Activated naive CD4-positive, alpha-beta T cell treated with anti-CD3 and anti-CD28 coated beads for 36 hours (primary cell): ENCODE measurements at regions of chr10 and their contacts with region 1.

Region 1: GRCh38 chr10:91298224-91298871 is 77.9 kb downstream of the PCGF5 start:
- DNase-seq: peak; percentile 90
- H3K4me3 Mint-ChIP-seq: peak overlapping the region; percentile 71
- H3K27ac Mint-ChIP-seq: no peak overlapping the region
- H3K4me1 Mint-ChIP-seq: peaks cover 8% of the 10 kb centered on the region
- H3K27me3 Mint-ChIP-seq: peaks cover 2% of the 10 kb centered on the region

Region 2: GRCh38 chr10:90912174-90912573 is 386.2 kb before region 1 on chr10:
- CTCF ChIA-PET with region 1: interaction called, 5 read pairs
- intact Hi-C with region 1: loop called (anchors 1 kb)
- DNase-seq: no peak
- H3K4me3 Mint-ChIP-seq: no peak overlapping the region
- H3K27ac Mint-ChIP-seq: no peak overlapping the region
- H3K4me1 Mint-ChIP-seq: peaks cover 2% of the 10 kb centered on the region
- H3K27me3 Mint-ChIP-seq: no peaks in the 10 kb centered on the region

Region 3: DNA sequence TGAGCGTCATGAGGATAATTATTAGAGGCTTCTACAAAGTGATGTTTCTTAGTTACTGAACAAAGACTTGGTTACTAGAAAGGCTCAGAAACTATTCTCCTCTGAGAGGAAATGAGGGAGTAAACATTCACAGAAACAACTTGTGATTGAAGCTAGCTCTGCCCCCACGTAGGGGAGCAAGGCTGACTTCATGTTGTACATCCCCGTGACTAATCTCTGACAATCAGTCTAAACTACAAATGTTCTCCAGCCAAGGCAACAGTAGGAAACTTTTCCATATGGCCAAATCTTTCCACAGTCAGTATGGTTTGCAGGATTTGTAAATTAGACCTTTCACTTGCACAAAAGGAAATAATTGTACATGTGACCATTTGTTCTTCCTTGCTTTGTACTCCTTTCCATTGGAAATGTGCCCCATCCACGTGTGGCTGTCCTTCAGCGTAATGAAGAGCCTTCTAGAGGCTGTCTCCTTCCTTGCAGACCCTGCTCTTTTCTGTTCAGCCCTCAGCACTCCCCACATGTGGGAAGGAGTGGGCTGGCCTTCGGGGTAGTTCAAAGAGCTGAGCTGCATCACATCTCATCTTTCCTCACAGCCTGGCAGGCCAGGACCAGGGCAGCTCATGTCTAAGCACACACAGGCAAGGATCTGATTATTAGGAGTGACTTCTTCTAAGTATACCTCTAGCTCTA is 15.6 kb after region 1 on chr10:
- CTCF ChIA-PET with region 1: interaction called, 17 read pairs
- intact Hi-C with region 1: no loop called
- DNase-seq: peak; percentile 50
- H3K4me3 Mint-ChIP-seq: no peak overlapping the region
- H3K27ac Mint-ChIP-seq: peak overlapping the region; percentile 82
- H3K4me1 Mint-ChIP-seq: peaks cover 11% of the 10 kb centered on the region
- H3K27me3 Mint-ChIP-seq: peaks cover 4% of the 10 kb centered on the region

Region 4: DNA sequence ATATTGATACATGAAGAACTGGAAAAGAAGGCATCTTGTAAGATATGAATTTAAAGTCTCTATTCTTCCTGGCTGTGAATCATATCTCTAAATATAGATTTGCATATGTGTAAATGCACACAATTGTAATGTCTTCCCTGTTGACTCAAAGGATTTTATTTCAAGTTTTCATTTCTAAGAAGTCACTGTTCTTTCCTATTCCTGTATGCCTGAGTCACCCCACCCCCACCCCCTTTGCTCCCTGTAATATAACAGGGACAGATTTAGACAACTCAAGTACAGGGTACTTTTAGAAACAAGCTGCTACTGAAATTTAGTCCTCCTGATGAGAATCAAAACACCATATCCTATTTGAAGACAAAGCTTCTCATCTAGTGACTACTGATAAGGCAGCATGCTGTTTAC is 68.8 kb after region 1 on chr10:
- CTCF ChIA-PET with region 1: interaction called, 5 read pairs
- intact Hi-C with region 1: loop called (anchors 1 kb)
- DNase-seq: peak; percentile 30
- H3K4me3 Mint-ChIP-seq: no peak overlapping the region
- H3K27ac Mint-ChIP-seq: no peak overlapping the region
- H3K4me1 Mint-ChIP-seq: peaks cover 11% of the 10 kb centered on the region
- H3K27me3 Mint-ChIP-seq: peaks cover 34% of the 10 kb centered on the region

Region 5: GRCh38 chr10:91409869-91410637 is 111.7 kb after region 1 on chr10 and contains the start of gene HECTD2:
- CTCF ChIA-PET with region 1: interaction called, 6 read pairs
- intact Hi-C with region 1: loop called (anchors 1 kb)
- DNase-seq: peak; percentile 77
- H3K4me3 Mint-ChIP-seq: peak within 1 kb of the TSS; percentile 83
- H3K27ac Mint-ChIP-seq: peak within 1 kb of the TSS; percentile 88
- H3K4me1 Mint-ChIP-seq: peaks cover 15% of the 10 kb centered on the region
- H3K27me3 Mint-ChIP-seq: peaks cover 12% of the 10 kb centered on the region
- total RNA-seq, gene HECTD2: 2.3 to 3.1 TPM

Region 6: DNA sequence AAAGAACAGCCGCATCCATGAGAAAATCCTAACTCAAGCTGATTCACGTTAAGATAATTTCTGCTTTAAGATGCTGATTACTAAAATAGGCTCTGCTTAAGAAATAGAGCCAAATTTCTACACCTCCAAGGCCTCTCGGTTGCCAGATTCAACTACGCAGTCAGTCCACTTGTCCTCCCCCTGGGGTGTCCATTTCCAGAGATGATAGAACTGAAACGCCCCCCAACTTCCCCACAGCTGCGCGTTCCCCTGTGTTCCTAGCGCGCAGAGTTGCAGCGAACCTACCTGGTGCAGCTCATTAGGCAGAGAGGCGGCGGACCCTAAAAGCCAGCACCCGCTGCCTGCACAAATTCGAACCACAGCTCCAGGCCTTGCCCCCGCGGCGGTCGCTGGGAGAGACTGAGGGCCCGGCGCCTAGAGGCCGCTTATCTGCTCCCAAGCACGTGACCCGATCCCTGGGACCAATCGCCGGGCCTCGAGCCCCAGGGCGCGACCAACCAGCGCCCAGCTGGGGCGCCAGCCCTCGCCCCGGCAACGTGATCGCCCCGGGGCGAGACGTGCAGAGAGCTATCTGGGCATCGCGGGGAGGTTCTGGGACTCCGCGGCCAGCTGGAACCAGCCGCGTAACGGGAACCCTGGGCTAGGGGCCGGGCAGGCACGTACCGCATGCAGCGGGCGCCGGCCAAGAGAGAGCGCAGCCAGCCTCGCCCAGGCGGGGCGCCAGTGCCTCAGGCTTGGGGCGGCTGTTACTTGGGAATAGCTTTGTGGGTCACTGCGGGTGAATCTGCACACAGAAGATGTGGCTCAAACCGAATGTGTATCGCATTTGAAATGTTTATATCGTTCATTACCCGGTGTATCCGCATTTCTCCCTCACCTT is 334.6 kb after region 1 on chr10 and contains the start of gene PPP1R3C:
- CTCF ChIA-PET with region 1: interaction called, 104 read pairs
- intact Hi-C with region 1: loop called (anchors 1 kb)
- DNase-seq: peak; percentile 63
- H3K4me3 Mint-ChIP-seq: peak within 1 kb of the TSS; percentile 71
- H3K27ac Mint-ChIP-seq: no peak within 1 kb of the TSS
- H3K4me1 Mint-ChIP-seq: peaks cover 9% of the 10 kb centered on the region
- H3K27me3 Mint-ChIP-seq: peaks cover 55% of the 10 kb centered on the region
- total RNA-seq, gene PPP1R3C: 0.07 to 0.12 TPM

Region 7: DNA sequence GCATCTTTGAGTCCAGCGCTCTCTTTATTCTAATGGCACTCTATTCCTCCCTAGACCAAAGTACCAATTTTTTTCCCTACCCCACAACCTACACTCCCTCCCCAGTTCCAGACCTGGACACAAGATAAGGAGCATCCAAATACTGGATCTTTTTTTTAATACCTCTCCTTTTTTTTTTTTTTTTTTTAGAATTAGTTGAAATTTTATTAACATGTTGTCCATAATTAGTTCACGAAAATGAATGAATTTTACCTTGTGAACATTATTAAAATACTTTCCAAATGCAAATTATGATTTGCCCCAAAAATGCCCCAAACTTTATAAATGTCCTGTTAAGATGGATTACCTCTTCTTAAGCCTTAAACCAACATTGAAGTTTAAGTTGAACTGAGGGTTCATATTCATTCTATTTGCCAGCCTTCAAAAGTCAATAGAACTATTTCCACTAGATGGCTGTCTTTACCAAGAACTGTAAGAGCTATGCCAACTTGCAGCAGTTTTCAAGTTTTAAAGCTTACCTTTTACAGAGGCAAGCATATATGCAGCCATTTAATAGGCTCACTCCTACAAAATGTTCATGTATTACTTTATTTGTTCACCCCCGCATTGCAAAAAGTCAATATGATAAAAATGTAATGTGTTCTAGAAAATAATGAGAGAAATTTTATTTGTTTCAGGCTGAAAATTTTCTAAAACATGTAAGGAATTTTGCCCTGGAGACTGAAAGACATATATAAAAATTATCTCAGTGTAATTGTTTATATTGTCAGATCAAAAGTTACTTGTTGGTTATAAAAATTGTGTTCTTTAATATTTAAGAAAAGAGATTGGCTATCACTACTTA is 460.2 kb after region 1 on chr10:
- CTCF ChIA-PET with region 1: interaction called, 3 read pairs
- intact Hi-C with region 1: loop called (anchors 1 kb)
- DNase-seq: no peak
- H3K4me3 Mint-ChIP-seq: no peak overlapping the region
- H3K27ac Mint-ChIP-seq: no peak overlapping the region
- H3K4me1 Mint-ChIP-seq: peaks cover 6% of the 10 kb centered on the region
- H3K27me3 Mint-ChIP-seq: peaks cover 16% of the 10 kb centered on the region